ENCODE measurements at regions of chr4 and their contacts with region 1.

Region 1: DNA sequence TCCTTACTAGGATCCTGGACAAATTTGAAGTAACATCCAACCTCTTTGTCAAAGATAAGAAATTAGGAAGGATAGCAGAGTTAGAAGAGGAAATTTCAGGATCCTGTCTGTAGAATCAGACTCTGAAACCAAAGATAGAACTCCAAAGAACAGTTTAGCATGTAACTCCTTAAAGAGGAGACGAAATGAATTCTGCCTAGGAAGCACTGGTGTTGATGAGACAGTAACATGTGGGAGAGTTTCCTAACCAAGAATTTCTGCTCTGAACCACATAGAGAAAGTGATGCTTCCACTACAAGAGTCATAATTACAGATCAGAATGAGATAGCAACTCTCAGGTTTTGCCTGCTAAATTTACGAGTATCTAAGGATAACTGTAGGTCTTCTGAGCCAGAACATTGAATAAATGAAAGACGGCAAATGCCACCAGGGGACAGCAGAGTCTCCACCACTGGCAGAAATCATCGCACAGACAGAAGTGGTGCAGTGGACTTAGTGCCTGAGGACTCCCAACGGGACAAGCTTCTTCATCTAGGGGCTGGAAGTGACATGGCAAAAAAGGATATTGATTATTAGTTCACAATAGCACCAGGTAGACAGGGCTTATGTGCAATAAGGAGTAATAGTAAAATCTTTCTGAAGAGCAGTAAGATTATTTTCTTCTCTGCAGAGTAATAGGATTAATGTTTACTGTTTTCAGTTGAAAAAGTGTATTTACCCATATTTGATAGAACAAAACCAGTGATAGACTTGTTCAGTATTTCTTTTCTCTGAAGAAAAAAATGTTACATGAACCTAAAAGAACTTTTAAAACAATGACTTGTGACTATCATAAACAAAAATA is 6.7 kb upstream of the PPID start:
- DNase-seq: peak in 2 of 4 donors; percentile 47 to 68
- ATAC-seq: peak; percentile 99
- H3K4me3 ChIP-seq: no peak overlapping the region
- H3K27ac ChIP-seq: no peak overlapping the region
- H3K4me1 ChIP-seq: peaks cover 0 to 6% of the 10 kb centered on the region in 2 donors
- H3K27me3 ChIP-seq: peaks cover 0 to 9% of the 10 kb centered on the region in 2 donors
- CTCF ChIP-seq: peak; percentile 56 to 86

Region 2: DNA sequence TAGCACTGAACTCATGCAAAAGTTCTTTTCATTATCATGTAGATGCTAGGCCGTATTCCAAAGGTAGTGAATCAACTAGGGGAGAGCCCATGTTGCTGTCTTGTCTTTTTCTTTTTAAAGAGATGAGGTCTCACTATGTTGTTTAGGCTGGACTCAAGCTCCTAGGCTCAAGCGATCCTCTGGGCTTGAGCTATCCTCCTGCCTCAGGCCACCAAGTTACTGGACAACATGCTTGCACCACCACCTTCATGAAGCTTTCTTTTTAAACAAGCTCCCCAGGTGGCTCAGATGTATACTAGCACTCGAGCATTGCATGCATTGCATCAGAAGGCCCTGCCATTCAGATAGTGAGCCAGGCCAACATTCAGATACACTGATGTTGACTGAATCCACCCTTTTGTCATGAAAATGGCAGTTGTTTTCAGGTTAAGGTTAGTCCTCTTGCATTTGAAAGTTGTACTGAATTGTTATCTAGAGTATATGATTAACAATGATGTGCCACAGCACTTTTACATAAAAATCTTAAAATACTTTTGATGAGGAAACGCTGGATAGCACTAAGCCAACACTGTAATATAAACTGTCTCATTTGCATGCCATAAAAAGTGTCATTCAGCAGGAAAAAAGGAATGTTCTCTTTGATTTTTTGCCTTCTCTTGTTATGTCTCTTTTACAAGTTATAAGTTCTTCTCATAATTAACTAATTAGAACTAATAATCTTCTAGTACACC is 115.5 kb after region 1 on chr4:
- intact Hi-C with region 1: loop called in 1 of 2 experiments (anchors 5 kb)
- DNase-seq: no peak
- ATAC-seq: peak; percentile 13
- H3K4me3 ChIP-seq: no peak overlapping the region
- H3K27ac ChIP-seq: no peak overlapping the region
- H3K4me1 ChIP-seq: peaks cover 0 to 3% of the 10 kb centered on the region in 2 donors
- H3K27me3 ChIP-seq: no peaks in the 10 kb centered on the region
- CTCF ChIP-seq: no peak

Region 3: GRCh38 chr4:158958489-158959270 is 228.7 kb after region 1 on chr4:
- intact Hi-C with region 1: no loop called
- DNase-seq: no peak
- ATAC-seq: no peak
- H3K4me3 ChIP-seq: no peak overlapping the region
- H3K27ac ChIP-seq: no peak overlapping the region
- H3K4me1 ChIP-seq: no peaks in the 10 kb centered on the region
- H3K27me3 ChIP-seq: no peaks in the 10 kb centered on the region
- CTCF ChIP-seq: no peak

Region 4: GRCh38 chr4:159206427-159206871 is 476.5 kb after region 1 on chr4:
- intact Hi-C with region 1: loop called in 1 of 2 experiments (anchors 10 kb)
- DNase-seq: no peak
- ATAC-seq: no peak
- H3K4me3 ChIP-seq: no peak overlapping the region
- H3K27ac ChIP-seq: no peak overlapping the region
- H3K4me1 ChIP-seq: peaks cover 3 to 33% of the 10 kb centered on the region in 2 donors
- H3K27me3 ChIP-seq: no peaks in the 10 kb centered on the region
- CTCF ChIP-seq: no peak

Region 5: DNA sequence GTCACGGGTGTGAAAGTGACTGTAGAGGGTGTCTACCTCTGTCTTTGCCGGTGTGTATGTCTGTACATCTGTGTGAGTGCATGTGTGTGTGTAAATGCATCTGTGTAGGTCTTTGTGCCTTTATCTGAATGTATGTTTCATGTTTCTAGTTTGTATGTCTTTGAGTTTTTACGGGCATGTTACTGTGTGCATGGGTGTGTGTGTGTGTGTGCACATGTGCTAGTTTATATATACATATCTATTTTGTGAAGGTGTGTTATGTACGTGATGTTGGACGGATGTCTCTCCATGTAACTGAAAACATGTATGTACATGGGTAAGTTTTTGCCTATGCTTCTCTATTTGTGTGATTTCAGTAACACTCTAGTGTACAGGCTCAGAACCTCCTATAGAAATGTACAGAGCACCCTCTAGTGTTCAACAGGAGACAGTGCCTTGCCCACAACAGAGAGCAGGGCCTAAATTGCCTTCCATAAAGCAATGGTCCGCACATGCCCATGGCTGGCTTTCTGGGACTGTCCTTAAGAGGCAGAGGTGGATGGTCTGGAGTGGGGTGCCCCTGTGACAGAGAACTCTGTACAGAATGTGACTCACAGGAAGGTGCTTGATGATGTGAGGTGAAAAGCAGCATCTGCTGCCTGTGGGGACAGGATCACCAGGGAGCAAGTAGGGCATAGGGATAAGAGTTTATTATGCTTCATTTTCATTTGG is 716.5 kb after region 1 on chr4:
- intact Hi-C with region 1: loop called in 1 of 2 experiments (anchors 10 kb)
- DNase-seq: peak in 2 of 4 donors; percentile 46 to 72
- ATAC-seq: peak; percentile 100
- H3K4me3 ChIP-seq: no peak overlapping the region
- H3K27ac ChIP-seq: no peak overlapping the region
- H3K4me1 ChIP-seq: no peaks in the 10 kb centered on the region
- H3K27me3 ChIP-seq: no peaks in the 10 kb centered on the region
- CTCF ChIP-seq: peak; percentile 86 to 87

Measured in left lung (tissue), 14 donors.